Ascending aorta (tissue), 2 donors: ENCODE measurements at regions of chr15 and their contacts with region 1.

Region 1: GRCh38 chr15:101251830-101252820 is at the start of gene CHSY1:
- DNase-seq: peak; percentile 83 to 96
- H3K4me3 ChIP-seq: peak within 1 kb of the TSS; percentile 94 to 96
- H3K27ac ChIP-seq: peak within 1 kb of the TSS; percentile 84 to 93
- H3K4me1 ChIP-seq: peaks cover 8 to 40% of the 10 kb centered on the region in 2 donors
- H3K27me3 ChIP-seq: no peaks in the 10 kb centered on the region
- CTCF ChIP-seq: peak in 2 of 3 experiments; percentile 38 to 44
- total RNA-seq, gene CHSY1: 47.4 TPM

Region 2: GRCh38 chr15:101088788-101089583 is 163.1 kb before region 1 on chr15:
- intact Hi-C with region 1: loop called (anchors 1 kb)
- DNase-seq: peak in 1 of 2 donors; percentile 83
- H3K4me3 ChIP-seq: peak overlapping the region; percentile 31 to 57
- H3K27ac ChIP-seq: peak overlapping the region in 1 of 2 donors; percentile 34
- H3K4me1 ChIP-seq: peaks cover 0 to 10% of the 10 kb centered on the region in 2 donors
- H3K27me3 ChIP-seq: no peaks in the 10 kb centered on the region
- CTCF ChIP-seq: peak; percentile 99 to 100 (median 100)

Region 3: GRCh38 chr15:101121511-101122090 is 130.5 kb before region 1 on chr15:
- intact Hi-C with region 1: loop called (anchors 1 kb)
- DNase-seq: peak; percentile 29 to 85
- H3K4me3 ChIP-seq: peak overlapping the region; percentile 55 to 65
- H3K27ac ChIP-seq: peak overlapping the region; percentile 84 to 94
- H3K4me1 ChIP-seq: peaks cover 18 to 27% of the 10 kb centered on the region in 2 donors
- H3K27me3 ChIP-seq: no peaks in the 10 kb centered on the region
- CTCF ChIP-seq: peak in 2 of 3 experiments; percentile 8 to 45

Region 4: GRCh38 chr15:101167753-101168463 is 84.2 kb before region 1 on chr15:
- intact Hi-C with region 1: loop called (anchors 1 kb)
- DNase-seq: peak; percentile 69 to 92
- H3K4me3 ChIP-seq: peak overlapping the region; percentile 13 to 37
- H3K27ac ChIP-seq: peak overlapping the region; percentile 94
- H3K4me1 ChIP-seq: peaks cover 23 to 36% of the 10 kb centered on the region in 2 donors
- H3K27me3 ChIP-seq: no peaks in the 10 kb centered on the region
- CTCF ChIP-seq: peak in 1 of 3 experiments; percentile 29

Region 5: GRCh38 chr15:101188637-101189408 is 63.3 kb before region 1 on chr15:
- intact Hi-C with region 1: loop called (anchors 5 kb)
- DNase-seq: peak in 1 of 2 donors; percentile 69
- H3K4me3 ChIP-seq: peak overlapping the region; percentile 42 to 64
- H3K27ac ChIP-seq: peak overlapping the region; percentile 82 to 83
- H3K4me1 ChIP-seq: peaks cover 0 to 58% of the 10 kb centered on the region in 2 donors
- H3K27me3 ChIP-seq: no peaks in the 10 kb centered on the region
- CTCF ChIP-seq: no peak

Region 6: GRCh38 chr15:101201406-101202174 is 50.5 kb before region 1 on chr15:
- intact Hi-C with region 1: loop called (anchors 2 kb)
- DNase-seq: peak; percentile 95 to 98
- H3K4me3 ChIP-seq: peak overlapping the region; percentile 31 to 41
- H3K27ac ChIP-seq: peak overlapping the region; percentile 70 to 89
- H3K4me1 ChIP-seq: peaks cover 18 to 57% of the 10 kb centered on the region in 2 donors
- H3K27me3 ChIP-seq: no peaks in the 10 kb centered on the region
- CTCF ChIP-seq: no peak

Region 7: GRCh38 chr15:101213581-101213980 is 38.5 kb before region 1 on chr15:
- intact Hi-C with region 1: no loop called
- DNase-seq: no peak
- H3K4me3 ChIP-seq: no peak overlapping the region
- H3K27ac ChIP-seq: no peak overlapping the region
- H3K4me1 ChIP-seq: peaks cover 2 to 24% of the 10 kb centered on the region in 2 donors
- H3K27me3 ChIP-seq: no peaks in the 10 kb centered on the region
- CTCF ChIP-seq: no peak